WTC11 (cell line): ENCODE measurements at regions of chr6 and their contacts with region 1.

Region 1: GRCh38 chr6:78810146-78810545 is 57.2 kb upstream of the IRAK1BP1 start:
- DNase-seq: peak; percentile 21
- ATAC-seq: peak; percentile 96
- H3K4me3 Mint-ChIP-seq: no peak overlapping the region
- H3K27ac Mint-ChIP-seq: no peak overlapping the region
- H3K4me1 Mint-ChIP-seq: no peaks in the 10 kb centered on the region
- H3K27me3 Mint-ChIP-seq: peaks cover 3% of the 10 kb centered on the region
- CTCF ChIP-seq: 0 out of 2 replicates have a peak, but pooled peaks have one; percentile 40

Region 2: DNA sequence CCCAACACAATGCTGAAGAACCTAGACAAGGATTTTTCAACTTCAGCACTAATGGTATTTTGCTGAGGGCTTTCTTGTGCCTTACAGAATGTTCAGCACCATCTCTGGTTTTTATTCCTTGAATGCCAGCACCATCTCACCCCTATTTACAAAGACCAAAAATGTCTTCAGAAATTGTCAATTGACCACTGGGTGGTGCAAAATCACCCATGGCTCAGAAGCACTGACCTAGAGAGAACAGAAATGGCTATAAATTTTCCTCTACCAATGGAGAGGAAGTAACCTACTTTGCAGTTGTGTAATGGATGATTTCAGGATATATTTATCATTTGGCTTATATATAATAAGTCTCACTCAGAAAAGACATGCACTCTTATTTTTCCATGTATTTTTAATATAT is 373.8 kb before region 1 on chr6:
- CTCF ChIA-PET with region 1: interaction called, 11 read pairs
- POLR2A ChIA-PET with region 1: no interaction called
- DNase-seq: no peak
- ATAC-seq: peak; percentile 64
- H3K4me3 Mint-ChIP-seq: no peak overlapping the region
- H3K27ac Mint-ChIP-seq: no peak overlapping the region
- H3K4me1 Mint-ChIP-seq: no peaks in the 10 kb centered on the region
- H3K27me3 Mint-ChIP-seq: no peaks in the 10 kb centered on the region
- CTCF ChIP-seq: no peak

Region 3: DNA sequence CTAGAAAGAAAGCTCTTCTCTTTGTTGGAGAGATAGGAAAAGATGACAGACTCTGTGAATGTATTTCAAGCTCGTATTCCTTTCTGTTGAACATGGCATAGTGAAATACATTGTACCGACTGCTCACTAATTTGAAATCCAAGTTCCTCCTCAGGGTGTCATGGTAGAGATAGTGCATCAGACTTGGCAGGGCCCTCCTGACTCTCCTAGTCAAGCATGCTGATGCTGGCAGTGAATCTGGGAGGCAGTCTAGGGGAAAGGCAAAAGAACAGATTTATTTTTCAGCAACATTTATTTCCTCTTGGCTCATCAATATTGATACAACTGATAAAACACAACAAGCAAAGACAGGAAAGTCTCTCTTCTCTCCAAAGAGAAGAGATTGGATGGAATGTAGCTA is 299.1 kb before region 1 on chr6:
- CTCF ChIA-PET with region 1: interaction called, 16 read pairs
- POLR2A ChIA-PET with region 1: no interaction called
- DNase-seq: no peak
- ATAC-seq: no peak
- H3K4me3 Mint-ChIP-seq: no peak overlapping the region
- H3K27ac Mint-ChIP-seq: no peak overlapping the region
- H3K4me1 Mint-ChIP-seq: no peaks in the 10 kb centered on the region
- H3K27me3 Mint-ChIP-seq: peaks cover 13% of the 10 kb centered on the region
- CTCF ChIP-seq: no peak

Region 4: GRCh38 chr6:78629154-78629721 is 180.9 kb before region 1 on chr6:
- CTCF ChIA-PET with region 1: interaction called, 14 read pairs
- POLR2A ChIA-PET with region 1: no interaction called
- DNase-seq: peak; percentile 56
- ATAC-seq: peak; percentile 90
- H3K4me3 Mint-ChIP-seq: peak overlapping the region; percentile 63
- H3K27ac Mint-ChIP-seq: peak overlapping the region; percentile 2; the same call in 1 of the 2 replicates
- H3K4me1 Mint-ChIP-seq: peaks cover 6% of the 10 kb centered on the region
- H3K27me3 Mint-ChIP-seq: no peaks in the 10 kb centered on the region
- CTCF ChIP-seq: no peak

Region 5: DNA sequence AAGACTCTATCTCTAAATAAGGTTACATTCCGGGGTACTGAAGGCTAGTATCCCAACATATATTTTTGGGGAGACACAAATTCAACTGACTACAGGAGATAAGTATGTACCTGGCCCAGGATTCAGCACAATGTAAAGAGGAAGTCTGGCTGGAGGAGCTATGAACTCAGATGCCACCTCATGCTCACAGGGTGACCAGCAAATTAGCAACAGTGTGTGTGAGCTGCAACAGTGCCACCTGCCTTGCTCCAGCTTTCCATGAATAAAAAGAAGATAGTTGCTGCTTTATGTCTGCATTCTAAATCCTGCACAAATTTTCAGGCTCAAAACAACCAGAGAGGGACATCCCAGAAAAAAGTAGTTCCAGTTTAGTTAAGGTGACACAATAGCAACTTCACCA is 21.3 kb before region 1 on chr6:
- CTCF ChIA-PET with region 1: no interaction called
- POLR2A ChIA-PET with region 1: no interaction called
- DNase-seq: no peak
- ATAC-seq: no peak
- H3K4me3 Mint-ChIP-seq: no peak overlapping the region
- H3K27ac Mint-ChIP-seq: no peak overlapping the region
- H3K4me1 Mint-ChIP-seq: no peaks in the 10 kb centered on the region
- H3K27me3 Mint-ChIP-seq: peaks cover 4% of the 10 kb centered on the region
- CTCF ChIP-seq: no peak

Region 6: DNA sequence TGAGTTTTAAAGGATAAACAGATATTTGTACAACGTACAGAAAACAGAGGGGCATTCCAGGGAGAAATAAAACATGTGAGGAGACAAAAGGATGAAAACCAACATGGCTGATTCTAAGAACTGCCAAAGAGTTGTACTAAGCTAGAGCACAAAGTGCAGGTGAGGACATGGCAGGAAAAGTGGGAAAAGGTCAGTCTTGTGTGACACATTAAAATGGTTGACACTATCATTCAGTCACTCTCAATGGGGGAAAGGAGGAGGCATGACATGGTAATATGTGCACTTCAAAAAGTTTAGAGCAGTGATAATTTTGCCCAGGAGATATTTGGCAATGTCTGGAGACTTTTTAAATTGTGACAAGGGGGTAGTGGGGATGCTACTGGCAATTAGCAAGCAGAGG is 246.1 kb after region 1 on chr6:
- CTCF ChIA-PET with region 1: no interaction called
- POLR2A ChIA-PET with region 1: no interaction called
- DNase-seq: no peak
- ATAC-seq: no peak
- H3K4me3 Mint-ChIP-seq: no peak overlapping the region
- H3K27ac Mint-ChIP-seq: peak overlapping the region; percentile 19; the same call in 1 of the 2 replicates
- H3K4me1 Mint-ChIP-seq: peaks cover 13% of the 10 kb centered on the region
- H3K27me3 Mint-ChIP-seq: no peaks in the 10 kb centered on the region
- CTCF ChIP-seq: no peak